Mammary epithelial cell (primary cell): ENCODE measurements at regions of chr16 and their contacts with region 1.

Region 1: GRCh38 chr16:1296688-1297412 is 12.6 kb upstream of the UBE2I start:
- DNase-seq: peak; percentile 93
- H3K4me3 ChIP-seq: no peak overlapping the region
- H3K27ac ChIP-seq: peak overlapping the region; percentile 73
- H3K4me1 ChIP-seq: peaks cover 21% of the 10 kb centered on the region
- H3K27me3 ChIP-seq: no peaks in the 10 kb centered on the region
- CTCF ChIP-seq: no peak

Region 2: GRCh38 chr16:720990-721764 is 575.7 kb before region 1 on chr16 and contains the start of gene ANTKMT:
- CTCF ChIA-PET with region 1: no interaction called
- dilution Hi-C with region 1: loop called (anchors 25 kb)
- in situ Hi-C with region 1: no loop called
- intact Hi-C with region 1: no loop called
- DNase-seq: peak; percentile 77
- H3K4me3 ChIP-seq: peak within 1 kb of the TSS; percentile 65 to 79 (median 78)
- H3K27ac ChIP-seq: peak within 1 kb of the TSS; percentile 24
- H3K4me1 ChIP-seq: peaks cover 32% of the 10 kb centered on the region
- H3K27me3 ChIP-seq: no peaks in the 10 kb centered on the region
- CTCF ChIP-seq: no peak
- total RNA-seq, gene ANTKMT: 13.5 to 35.4 TPM

Region 3: GRCh38 chr16:1105888-1106620 is 190.8 kb before region 1 on chr16:
- CTCF ChIA-PET with region 1: no interaction called
- dilution Hi-C with region 1: no loop called
- in situ Hi-C with region 1: no loop called
- intact Hi-C with region 1: loop called (anchors 1 kb)
- DNase-seq: peak; percentile 26
- H3K4me3 ChIP-seq: no peak overlapping the region
- H3K27ac ChIP-seq: no peak overlapping the region
- H3K4me1 ChIP-seq: peaks cover 4% of the 10 kb centered on the region
- H3K27me3 ChIP-seq: peaks cover 34% of the 10 kb centered on the region
- CTCF ChIP-seq: peak; percentile 59 to 88

Region 4: GRCh38 chr16:1509307-1510221 is 212.7 kb after region 1 on chr16:
- CTCF ChIA-PET with region 1: no interaction called
- dilution Hi-C with region 1: loop called (anchors 10 kb)
- in situ Hi-C with region 1: no loop called
- intact Hi-C with region 1: no loop called
- DNase-seq: no peak
- H3K4me3 ChIP-seq: no peak overlapping the region
- H3K27ac ChIP-seq: no peak overlapping the region
- H3K4me1 ChIP-seq: no peaks in the 10 kb centered on the region
- H3K27me3 ChIP-seq: no peaks in the 10 kb centered on the region
- CTCF ChIP-seq: no peak

Region 5: DNA sequence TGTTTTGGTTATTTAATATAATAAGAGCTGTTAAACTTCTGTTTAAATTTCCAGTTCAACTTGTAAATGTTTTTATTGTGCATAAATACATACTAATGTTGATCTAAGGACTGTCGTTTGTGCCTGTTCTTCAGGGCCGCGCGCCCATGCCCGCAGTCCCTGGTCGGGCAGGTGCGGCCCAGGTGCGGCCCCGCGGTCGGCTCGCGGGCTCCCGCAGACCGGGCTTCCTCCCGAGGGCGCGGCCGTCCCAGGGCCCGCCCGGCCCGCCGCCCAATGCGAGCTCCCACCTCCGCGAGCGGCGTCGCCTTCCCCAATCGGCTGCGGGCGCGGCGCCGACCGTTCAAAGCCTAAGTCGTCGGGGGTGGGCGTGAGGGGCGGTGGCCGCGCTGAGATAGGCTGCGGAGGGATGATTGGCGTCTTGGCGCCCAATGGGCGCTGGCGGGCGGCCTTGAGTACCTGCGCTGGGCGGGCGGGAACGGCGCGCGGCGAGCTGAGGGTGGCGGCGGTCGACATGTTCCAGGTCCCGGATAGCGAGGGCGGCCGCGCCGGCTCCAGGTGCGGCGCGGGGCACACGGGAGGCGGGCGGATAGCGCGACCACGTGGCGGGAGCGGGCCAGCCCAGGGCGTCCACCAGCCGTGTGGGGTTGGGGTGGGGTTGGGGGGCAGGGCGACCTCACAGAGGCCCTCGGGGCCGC is 381.1 kb after region 1 on chr16 and contains the start of gene JPT2:
- CTCF ChIA-PET with region 1: no interaction called
- dilution Hi-C with region 1: loop called (anchors 10 kb)
- in situ Hi-C with region 1: no loop called
- intact Hi-C with region 1: no loop called
- DNase-seq: peak; percentile 98
- H3K4me3 ChIP-seq: peak within 1 kb of the TSS; percentile 79 to 97 (median 97)
- H3K27ac ChIP-seq: peak within 1 kb of the TSS; percentile 88
- H3K4me1 ChIP-seq: peaks cover 33% of the 10 kb centered on the region
- H3K27me3 ChIP-seq: no peaks in the 10 kb centered on the region
- CTCF ChIP-seq: no peak
- total RNA-seq, gene JPT2: 53.0 to 117 TPM